Ascending aorta (tissue), 2 donors: ENCODE measurements at regions of chr18 and their contacts with region 1.

Region 1: DNA sequence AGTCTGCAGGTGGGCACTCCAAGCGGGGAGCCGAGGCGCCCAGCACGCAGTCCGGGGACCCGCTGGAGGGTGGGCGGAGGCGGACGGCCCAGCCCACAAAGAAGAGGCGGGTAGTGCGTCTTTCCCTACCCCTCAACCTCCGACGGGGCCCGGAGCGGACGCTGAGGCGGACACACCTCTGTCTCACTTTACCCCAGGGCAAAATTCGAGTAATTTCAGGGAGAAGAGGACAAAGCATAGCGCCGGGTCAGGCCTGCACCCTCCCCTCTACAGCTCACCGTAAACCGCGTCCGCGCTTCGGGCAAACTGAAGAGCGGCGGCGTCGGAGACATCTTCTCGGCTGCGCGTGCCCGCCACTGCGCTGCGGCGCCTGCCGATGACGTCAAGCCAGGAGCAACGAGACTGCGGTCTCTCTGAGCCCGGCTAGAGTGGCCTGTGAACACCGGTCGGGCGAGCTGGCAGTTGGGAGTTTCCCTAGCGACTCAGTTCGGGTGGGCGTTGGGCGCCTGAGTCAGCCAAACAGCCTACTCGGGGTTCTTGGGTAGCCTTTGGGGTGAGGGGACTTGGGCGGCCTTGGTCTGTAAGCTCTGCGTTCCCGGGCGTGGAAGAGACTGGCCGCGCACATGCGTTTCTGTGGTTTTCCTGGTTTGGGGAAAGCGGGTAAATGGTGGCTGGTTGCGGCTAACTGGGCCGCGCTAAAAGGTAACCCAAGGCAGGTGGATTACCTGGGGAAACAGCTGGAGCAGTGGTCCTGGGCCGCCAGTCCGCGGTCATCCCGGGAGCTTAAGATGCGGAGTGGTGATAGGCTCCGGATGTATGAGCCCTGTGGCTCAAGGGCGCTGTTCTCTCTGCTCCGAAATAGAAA is at the start of gene THOC1:
- DNase-seq: peak; percentile 70 to 95
- H3K4me3 ChIP-seq: peak within 1 kb of the TSS; percentile 66 to 80
- H3K27ac ChIP-seq: peak within 1 kb of the TSS; percentile 77 to 90
- H3K4me1 ChIP-seq: peaks cover 6 to 7% of the 10 kb centered on the region in 2 donors
- H3K27me3 ChIP-seq: no peaks in the 10 kb centered on the region
- CTCF ChIP-seq: no peak
- total RNA-seq, gene THOC1: 12.0 TPM

Region 2: DNA sequence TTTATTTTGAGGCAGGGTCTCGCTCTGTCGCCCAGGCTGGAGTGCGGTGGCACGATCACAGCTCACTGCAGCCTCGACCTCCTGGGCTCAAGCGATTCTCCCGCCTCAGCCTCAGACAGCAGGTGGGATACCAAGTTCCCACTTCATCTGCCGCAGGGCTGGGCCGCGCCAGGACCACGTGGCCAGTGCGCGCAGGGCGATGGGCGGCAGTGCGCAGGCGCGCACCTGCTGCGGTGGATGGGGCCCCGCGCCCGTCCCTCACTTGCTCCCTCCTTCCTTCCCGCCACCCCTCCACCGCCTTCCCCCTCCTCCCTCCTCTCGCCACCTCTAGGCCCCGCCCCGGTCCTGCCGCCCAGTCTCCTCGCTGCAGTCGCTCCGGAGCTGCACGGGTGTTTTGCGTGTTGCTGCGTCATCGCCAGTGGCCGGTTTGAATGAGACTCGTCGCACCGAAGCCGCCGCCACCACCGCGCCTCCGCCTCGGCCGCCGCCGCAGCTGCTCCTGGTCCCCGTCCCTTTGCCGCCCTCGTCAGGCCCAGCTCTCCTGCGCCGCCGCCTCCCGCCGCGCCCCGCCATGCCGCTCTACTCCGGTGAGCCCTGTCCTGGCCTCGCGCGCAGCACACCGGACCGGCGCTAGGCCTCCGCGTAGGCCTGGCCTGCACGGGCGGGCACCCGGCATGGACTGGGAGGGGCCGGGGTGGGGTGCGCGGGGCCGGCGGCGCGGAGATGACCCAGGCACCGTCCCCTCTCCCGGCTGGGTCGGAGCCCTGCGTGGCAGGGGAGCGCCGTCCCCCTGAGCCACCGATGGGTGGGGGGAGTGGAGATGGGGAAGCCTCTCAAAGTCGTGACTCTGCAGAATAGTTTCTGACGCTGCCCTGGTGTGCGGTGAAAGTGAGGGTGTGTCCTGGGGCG is 109.5 kb before region 1 on chr18 and contains the start of gene USP14:
- intact Hi-C with region 1: loop called (anchors 2 kb)
- DNase-seq: peak; percentile 89 to 97
- H3K4me3 ChIP-seq: peak within 1 kb of the TSS; percentile 94 to 97
- H3K27ac ChIP-seq: peak within 1 kb of the TSS; percentile 79 to 87
- H3K4me1 ChIP-seq: peaks cover 5 to 11% of the 10 kb centered on the region in 2 donors
- H3K27me3 ChIP-seq: no peaks in the 10 kb centered on the region
- CTCF ChIP-seq: peak in 2 of 3 experiments; percentile 18 to 21
- total RNA-seq, gene USP14: 9.7 TPM

Region 3: GRCh38 chr18:616380-616995 is 348.6 kb after region 1 on chr18:
- intact Hi-C with region 1: loop called (anchors 5 kb)
- DNase-seq: no peak
- H3K4me3 ChIP-seq: no peak overlapping the region
- H3K27ac ChIP-seq: no peak overlapping the region
- H3K4me1 ChIP-seq: no peaks in the 10 kb centered on the region
- H3K27me3 ChIP-seq: no peaks in the 10 kb centered on the region
- CTCF ChIP-seq: peak; percentile 56 to 86 (median 60)

Region 4: DNA sequence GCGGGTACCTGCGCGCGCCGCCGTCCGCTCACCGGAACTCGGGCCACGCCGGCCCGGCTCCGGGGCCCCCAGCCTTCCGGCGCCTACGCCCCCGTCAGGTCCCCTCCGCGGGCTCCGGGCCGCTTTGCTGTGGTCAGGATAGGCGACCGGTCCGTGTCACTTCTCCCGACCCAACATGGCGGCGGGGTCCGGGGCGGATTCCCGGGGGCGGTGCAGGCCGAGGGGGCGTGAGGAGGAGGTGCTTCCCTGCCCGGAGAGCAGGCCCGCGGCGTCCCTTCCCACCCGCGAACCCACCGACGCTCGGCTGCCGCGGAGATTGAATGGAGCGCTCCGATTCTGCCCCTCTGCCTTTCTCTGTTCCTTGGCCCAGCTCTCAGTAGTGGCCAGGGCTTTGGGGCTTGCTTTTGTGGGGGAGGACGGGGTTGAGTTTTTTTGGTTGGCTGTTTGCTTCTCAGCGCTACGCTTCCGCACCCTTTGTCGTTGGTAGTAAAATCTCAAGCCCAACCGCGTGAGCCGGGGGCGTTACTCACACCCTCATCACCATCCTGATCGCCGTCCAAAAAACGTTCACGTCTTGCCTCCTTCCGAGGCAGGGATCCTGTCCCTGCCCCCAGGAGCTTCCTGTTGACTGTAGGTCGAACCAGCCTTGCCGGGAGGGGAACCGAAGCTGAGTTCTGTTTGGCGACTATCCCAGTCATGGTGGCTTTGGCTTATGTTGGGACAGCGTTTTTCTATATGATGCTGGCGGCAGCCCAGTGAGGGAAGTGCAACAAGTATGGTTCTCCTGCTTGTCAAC is 544.7 kb after region 1 on chr18:
- intact Hi-C with region 1: loop called (anchors 5 kb)
- DNase-seq: peak; percentile 60 to 92
- H3K4me3 ChIP-seq: peak overlapping the region; percentile 93 to 95
- H3K27ac ChIP-seq: peak overlapping the region; percentile 82 to 95
- H3K4me1 ChIP-seq: no peaks in the 10 kb centered on the region
- H3K27me3 ChIP-seq: no peaks in the 10 kb centered on the region
- CTCF ChIP-seq: no peak